ENCODE measurements at regions of chr9 and their contacts with region 1.

Region 1: GRCh38 chr9:33287087-33287490 is 3.2 kb upstream of the NFX1 start:
- DNase-seq: no peak
- ATAC-seq: no peak
- H3K4me3 ChIP-seq: no peak overlapping the region
- H3K27ac ChIP-seq: no peak overlapping the region
- H3K4me1 ChIP-seq: peaks cover 2% of the 10 kb centered on the region
- H3K27me3 ChIP-seq: no peaks in the 10 kb centered on the region

Region 2: DNA sequence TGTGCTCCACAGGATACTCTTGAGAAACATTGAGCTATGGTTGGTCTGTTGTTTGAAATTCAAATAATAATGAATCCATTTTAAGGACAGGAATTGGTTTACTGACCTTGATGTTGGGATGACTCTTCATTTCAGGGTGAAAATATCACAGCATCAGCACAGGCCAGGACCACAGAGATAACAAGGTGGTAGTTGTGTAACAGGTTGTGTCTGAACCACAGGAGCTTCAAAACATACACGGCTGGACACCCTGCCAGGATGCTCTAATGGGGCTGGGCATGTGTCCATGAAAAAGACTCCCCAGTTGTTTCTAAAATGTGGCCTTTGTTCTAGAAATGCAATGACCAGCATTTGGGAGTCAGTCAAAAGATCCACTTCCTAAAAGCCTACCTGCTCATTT is 832.8 kb before region 1 on chr9:
- intact Hi-C with region 1: no loop called
- DNase-seq: no peak
- ATAC-seq: no peak
- H3K4me3 ChIP-seq: no peak overlapping the region
- H3K27ac ChIP-seq: no peak overlapping the region
- H3K4me1 ChIP-seq: no peaks in the 10 kb centered on the region
- H3K27me3 ChIP-seq: no peaks in the 10 kb centered on the region

Region 3: DNA sequence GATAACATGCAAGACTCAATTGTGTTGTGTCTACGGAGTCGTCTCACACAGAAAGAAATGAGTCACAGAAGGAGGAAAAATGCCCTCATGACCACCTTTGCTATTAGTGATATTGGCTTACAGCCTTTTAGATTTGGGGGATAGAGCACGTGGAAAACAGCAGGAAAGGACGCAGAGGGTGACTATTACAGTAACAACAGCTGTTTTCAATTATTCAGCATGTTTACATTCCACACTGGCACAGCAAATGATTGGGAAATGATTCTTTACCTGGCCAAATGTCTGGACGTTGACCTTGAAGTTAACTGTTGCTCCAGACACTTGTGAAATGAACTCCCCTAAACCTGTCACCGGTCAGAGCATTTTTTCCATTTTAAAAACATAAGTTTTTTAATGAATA is 332.4 kb before region 1 on chr9:
- intact Hi-C with region 1: no loop called
- DNase-seq: no peak
- ATAC-seq: no peak
- H3K4me3 ChIP-seq: no peak overlapping the region
- H3K27ac ChIP-seq: no peak overlapping the region
- H3K4me1 ChIP-seq: no peaks in the 10 kb centered on the region
- H3K27me3 ChIP-seq: no peaks in the 10 kb centered on the region

Region 4: GRCh38 chr9:33442125-33442524 is 155.0 kb after region 1 on chr9:
- intact Hi-C with region 1: no loop called
- DNase-seq: no peak
- ATAC-seq: no peak
- H3K4me3 ChIP-seq: no peak overlapping the region
- H3K27ac ChIP-seq: no peak overlapping the region
- H3K4me1 ChIP-seq: peaks cover 7% of the 10 kb centered on the region
- H3K27me3 ChIP-seq: no peaks in the 10 kb centered on the region

Region 5: GRCh38 chr9:33452828-33453271 is 165.8 kb after region 1 on chr9:
- intact Hi-C with region 1: loop called in 1 of 4 experiments (anchors 10 kb)
- DNase-seq: peak in 2 of 3 donors; percentile 58 to 60
- ATAC-seq: peak; percentile 35 to 80
- H3K4me3 ChIP-seq: no peak overlapping the region
- H3K27ac ChIP-seq: no peak overlapping the region
- H3K4me1 ChIP-seq: no peaks in the 10 kb centered on the region
- H3K27me3 ChIP-seq: no peaks in the 10 kb centered on the region

Measured in right cardiac atrium (tissue), 5 donors.